ENCODE measurements at regions of chr6 and their contacts with region 1.

Region 1: GRCh38 chr6:105402939-105403935 is at the start of gene PREP:
- DNase-seq: peak; percentile 84
- H3K4me3 Mint-ChIP-seq: peak within 1 kb of the TSS; percentile 93
- H3K27ac Mint-ChIP-seq: peak within 1 kb of the TSS; percentile 88
- H3K4me1 Mint-ChIP-seq: peaks cover 58% of the 10 kb centered on the region
- H3K27me3 Mint-ChIP-seq: peaks cover 5% of the 10 kb centered on the region
- total RNA-seq, gene PREP: 55.9 and 58.1 TPM in 2 replicates

Region 2: DNA sequence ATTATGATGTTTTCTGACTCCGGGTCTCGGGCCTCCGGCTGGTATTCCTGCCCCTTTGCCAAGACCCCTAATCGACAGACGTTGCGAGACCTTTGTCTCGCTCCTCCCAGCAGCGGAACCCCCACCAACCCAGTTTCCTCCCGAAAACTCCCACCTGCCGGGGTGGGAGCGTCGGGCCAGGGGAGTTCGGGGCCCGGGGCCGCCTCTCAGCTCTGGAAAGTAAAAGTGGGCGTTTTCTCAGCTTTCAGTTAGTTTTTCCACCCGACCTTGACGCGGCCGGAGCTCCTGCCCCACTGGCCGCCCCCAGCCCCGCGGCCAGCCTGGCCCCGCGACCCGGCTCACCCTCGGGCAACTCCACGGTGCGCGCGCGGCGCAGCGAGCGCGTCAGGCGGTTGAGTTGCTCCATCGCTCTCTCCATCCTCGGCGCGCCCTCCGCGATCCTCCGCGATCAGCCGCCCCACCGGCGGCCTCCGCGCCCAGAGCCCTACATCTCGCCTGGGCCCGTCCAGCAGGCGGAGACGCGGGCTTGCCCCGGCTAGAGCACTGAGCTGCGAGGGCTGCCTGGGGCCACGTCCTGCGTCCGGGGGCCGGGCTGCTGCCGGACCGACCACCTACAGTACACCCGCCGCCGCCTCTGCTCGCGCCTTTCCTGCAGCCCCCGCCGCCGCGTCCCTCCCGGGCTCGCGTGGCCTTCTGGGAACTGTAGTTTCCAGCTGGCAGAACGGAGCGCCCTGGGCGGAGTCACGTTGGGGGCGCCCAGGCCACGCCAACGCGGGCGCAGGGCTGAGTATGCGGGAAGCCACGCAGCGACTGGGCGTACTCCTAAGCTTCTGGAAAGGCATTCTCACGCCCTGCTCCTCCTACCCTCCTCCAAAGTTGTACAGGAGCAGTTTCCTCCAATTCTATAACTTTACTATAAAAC is 543.8 kb before region 1 on chr6 and contains the start of gene HACE1:
- intact Hi-C with region 1: loop called (anchors 2 kb)
- DNase-seq: peak; percentile 87
- H3K4me3 Mint-ChIP-seq: peak within 1 kb of the TSS; percentile 95
- H3K27ac Mint-ChIP-seq: peak within 1 kb of the TSS; percentile 82
- H3K4me1 Mint-ChIP-seq: peaks cover 24% of the 10 kb centered on the region
- H3K27me3 Mint-ChIP-seq: peaks cover 2% of the 10 kb centered on the region
- total RNA-seq, gene HACE1: 16.9 and 19.3 TPM in 2 replicates

Region 3: DNA sequence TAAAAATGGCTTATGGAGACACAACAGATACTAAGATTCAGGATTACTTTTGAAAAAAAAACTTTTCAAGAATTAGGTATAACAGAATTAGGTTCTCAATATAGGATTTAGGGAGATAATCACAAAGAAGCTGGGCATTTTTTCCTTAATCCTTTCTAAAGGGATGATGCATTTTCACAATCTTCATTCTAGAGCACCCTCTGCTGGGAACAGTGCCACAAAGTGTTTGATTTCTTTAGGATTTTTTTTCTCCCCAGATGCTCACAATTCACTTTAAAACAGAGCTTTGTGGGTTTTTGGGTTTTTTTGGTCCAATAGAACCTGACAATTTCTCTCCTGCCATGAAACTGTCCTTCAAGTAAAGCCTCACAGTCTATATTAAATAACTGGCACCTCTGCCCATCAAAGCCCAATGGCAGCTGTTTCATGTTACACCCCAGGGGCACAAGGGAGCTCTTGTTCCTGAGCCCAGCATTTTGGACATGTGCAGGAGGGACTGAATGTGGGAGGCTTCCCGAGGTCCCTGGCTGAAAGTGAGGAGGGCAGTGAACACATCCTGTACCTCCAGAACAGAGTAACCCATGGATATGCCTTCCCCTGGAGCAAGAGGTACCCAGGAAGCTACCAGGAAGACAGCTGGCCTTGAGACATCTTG is 40.0 kb before region 1 on chr6:
- intact Hi-C with region 1: loop called (anchors 2 kb)
- DNase-seq: no peak
- H3K4me3 Mint-ChIP-seq: no peak overlapping the region
- H3K27ac Mint-ChIP-seq: no peak overlapping the region
- H3K4me1 Mint-ChIP-seq: peaks cover 17% of the 10 kb centered on the region
- H3K27me3 Mint-ChIP-seq: no peaks in the 10 kb centered on the region

Region 4: DNA sequence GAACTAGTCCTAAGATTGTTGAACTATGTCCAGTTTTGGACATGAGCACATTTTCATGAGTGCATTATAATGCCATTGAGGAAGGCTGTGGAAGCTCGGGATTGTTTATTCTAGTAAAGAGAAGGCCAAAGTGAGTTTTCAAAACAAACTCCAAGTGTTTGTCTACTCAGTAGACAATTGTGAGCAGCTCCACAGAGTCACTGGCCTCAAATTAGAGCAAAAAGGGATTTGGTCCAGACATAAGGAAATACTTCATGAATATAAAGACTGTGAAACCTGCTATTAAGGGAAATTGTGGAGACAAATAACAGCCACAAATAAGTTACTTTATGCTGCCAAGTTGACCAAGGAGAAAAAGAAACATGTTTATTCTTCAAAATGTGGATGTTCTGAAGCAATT is 42.2 kb after region 1 on chr6:
- intact Hi-C with region 1: no loop called
- DNase-seq: no peak
- H3K4me3 Mint-ChIP-seq: no peak overlapping the region
- H3K27ac Mint-ChIP-seq: no peak overlapping the region
- H3K4me1 Mint-ChIP-seq: no peaks in the 10 kb centered on the region
- H3K27me3 Mint-ChIP-seq: peaks cover 44% of the 10 kb centered on the region

Region 5: GRCh38 chr6:106325336-106326178 is 922.3 kb after region 1 on chr6 and contains the start of gene ATG5:
- intact Hi-C with region 1: loop called (anchors 1 kb)
- DNase-seq: peak; percentile 100
- H3K4me3 Mint-ChIP-seq: peak within 1 kb of the TSS; percentile 100
- H3K27ac Mint-ChIP-seq: peak within 1 kb of the TSS; percentile 98
- H3K4me1 Mint-ChIP-seq: peaks cover 35% of the 10 kb centered on the region
- H3K27me3 Mint-ChIP-seq: peaks cover 22% of the 10 kb centered on the region
- total RNA-seq, gene ATG5: 36.0 and 36.7 TPM in 2 replicates

Region 6: DNA sequence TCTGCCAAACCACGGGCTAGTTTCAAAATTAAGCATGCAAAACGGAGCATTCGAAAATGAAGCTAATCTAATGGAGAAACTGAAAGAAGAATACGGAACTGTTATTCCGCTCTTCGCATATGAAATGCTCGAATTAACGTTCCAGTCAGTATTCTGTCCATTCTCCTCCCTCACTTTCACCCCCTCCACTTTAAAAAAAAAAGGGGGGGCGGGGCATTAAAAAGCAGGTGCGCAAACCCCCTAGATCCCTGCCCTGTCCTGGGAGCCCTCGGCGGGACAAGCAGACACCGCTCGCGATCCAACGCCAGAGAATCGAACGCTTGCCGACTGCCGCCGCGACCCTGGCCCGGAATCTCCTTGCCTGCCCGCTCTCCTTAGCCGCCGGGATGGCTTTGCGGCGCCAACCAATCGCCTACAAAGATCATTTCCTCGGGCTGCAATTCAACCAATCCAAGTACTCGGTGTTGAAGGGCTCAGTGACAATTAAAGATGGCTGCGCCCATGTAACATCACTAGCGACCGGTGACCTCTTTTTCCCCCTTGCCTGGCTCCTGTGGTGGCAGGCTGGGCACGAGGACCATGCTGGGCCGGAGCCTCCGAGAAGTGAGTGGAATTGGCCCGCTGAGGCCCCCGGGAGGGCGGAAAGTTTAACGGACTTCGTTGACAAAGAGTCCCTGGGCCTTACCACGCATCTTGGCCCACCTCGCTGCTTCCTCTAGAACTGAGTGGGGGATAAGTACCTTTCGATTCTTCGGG is 1226.0 kb after region 1 on chr6 and contains the starts of genes QRSL1 and RTN4IP1:
- intact Hi-C with region 1: loop called (anchors 10 kb)
- DNase-seq: peak; percentile 84
- H3K4me3 Mint-ChIP-seq: peak within 1 kb of the TSS; percentile 95
- H3K27ac Mint-ChIP-seq: peak within 1 kb of the TSS; percentile 98
- H3K4me1 Mint-ChIP-seq: peaks cover 33% of the 10 kb centered on the region
- H3K27me3 Mint-ChIP-seq: no peaks in the 10 kb centered on the region
- total RNA-seq, gene QRSL1: 18.6 and 21.9 TPM in 2 replicates
- total RNA-seq, gene RTN4IP1: 6.4 and 6.8 TPM in 2 replicates